CD4-positive, alpha-beta memory T cell (primary cell): ENCODE measurements at regions of chr4 and their contacts with region 1.

Region 1: DNA sequence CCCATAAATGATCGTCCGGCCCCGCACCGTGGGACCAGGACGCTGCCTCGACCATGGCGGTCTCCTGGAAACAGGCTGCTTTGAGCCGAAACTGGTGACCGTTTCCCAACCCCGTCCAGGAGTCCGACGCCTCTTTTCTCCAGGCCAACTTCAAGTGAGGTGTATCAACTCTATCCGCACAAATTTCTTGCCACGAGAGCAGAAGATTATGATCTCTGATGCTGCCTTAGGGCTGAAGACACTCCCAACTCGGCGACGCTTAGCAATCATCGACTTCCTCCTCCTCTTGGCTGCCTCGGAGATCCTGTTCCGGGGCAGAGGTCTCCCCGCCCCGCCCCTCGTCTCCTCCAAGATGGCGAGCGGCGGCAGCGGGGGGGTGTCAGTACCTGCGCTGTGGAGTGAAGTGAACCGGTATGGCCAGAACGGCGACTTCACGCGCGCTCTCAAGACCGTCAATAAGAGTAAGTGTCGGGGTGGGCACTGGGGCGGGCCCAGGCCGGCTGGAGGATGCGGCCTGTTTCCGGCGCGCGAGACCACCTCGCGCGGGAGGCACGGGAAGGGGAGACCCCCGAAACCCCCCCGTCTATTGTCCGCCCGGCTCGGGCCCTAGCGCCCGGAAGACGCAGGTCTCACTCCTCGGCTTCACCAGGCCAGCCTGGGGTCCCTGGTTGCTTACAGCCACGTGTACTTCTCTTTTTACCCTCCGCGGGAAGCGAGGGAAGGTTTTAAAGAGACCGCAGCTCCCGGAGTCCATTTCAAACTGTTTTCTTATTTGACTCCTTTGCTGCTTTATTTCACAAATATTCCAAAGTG is at the start of gene SRP72:
- DNase-seq: peak; percentile 88 to 97 (median 89)
- H3K4me3 ChIP-seq: peak within 1 kb of the TSS; percentile 93 to 98
- H3K4me3 Mint-ChIP-seq: peak within 1 kb of the TSS; percentile 94 to 100 (median 98)
- H3K27ac ChIP-seq: peak within 1 kb of the TSS; percentile 90
- H3K27ac Mint-ChIP-seq: peak within 1 kb of the TSS; percentile 93 to 100 (median 98)
- H3K4me1 ChIP-seq: peaks cover 50% of the 10 kb centered on the region
- H3K4me1 Mint-ChIP-seq: peaks cover 39 to 64% (median 51%) of the 10 kb centered on the region in 4 donors
- H3K27me3 ChIP-seq: no peaks in the 10 kb centered on the region
- H3K27me3 Mint-ChIP-seq: no peaks in the 10 kb centered on the region
- total RNA-seq, gene SRP72: 104 to 107 TPM

Region 2: GRCh38 chr4:55650483-55650882 is 817.0 kb before region 1 on chr4:
- CTCF ChIA-PET with region 1: no interaction called
- POLR2A ChIA-PET with region 1: no interaction called
- intact Hi-C with region 1: no loop called
- DNase-seq: no peak
- H3K4me3 ChIP-seq: no peak overlapping the region
- H3K4me3 Mint-ChIP-seq: no peak overlapping the region
- H3K27ac ChIP-seq: no peak overlapping the region
- H3K27ac Mint-ChIP-seq: no peak overlapping the region
- H3K4me1 ChIP-seq: no peaks in the 10 kb centered on the region
- H3K4me1 Mint-ChIP-seq: no peaks in the 10 kb centered on the region
- H3K27me3 ChIP-seq: no peaks in the 10 kb centered on the region
- H3K27me3 Mint-ChIP-seq: peaks cover 11 to 14% of the 10 kb centered on the region in 2 donors

Region 3: GRCh38 chr4:56387023-56388001 is 80.2 kb before region 1 on chr4 and contains the start of gene AASDH:
- CTCF ChIA-PET with region 1: no interaction called
- POLR2A ChIA-PET with region 1: interaction called, 15 read pairs
- intact Hi-C with region 1: loop called (anchors 1 kb)
- DNase-seq: peak; percentile 94 to 96 (median 95)
- H3K4me3 ChIP-seq: peak within 1 kb of the TSS; percentile 63 to 94
- H3K4me3 Mint-ChIP-seq: peak within 1 kb of the TSS; percentile 91 to 100 (median 96)
- H3K27ac ChIP-seq: peak within 1 kb of the TSS; percentile 81
- H3K27ac Mint-ChIP-seq: peak within 1 kb of the TSS; percentile 98 to 100 (median 99)
- H3K4me1 ChIP-seq: peaks cover 20% of the 10 kb centered on the region
- H3K4me1 Mint-ChIP-seq: peaks cover 21 to 48% (median 37%) of the 10 kb centered on the region in 4 donors
- H3K27me3 ChIP-seq: no peaks in the 10 kb centered on the region
- H3K27me3 Mint-ChIP-seq: no peaks in the 10 kb centered on the region
- total RNA-seq, gene AASDH: 19.2 to 23.7 TPM

Region 4: DNA sequence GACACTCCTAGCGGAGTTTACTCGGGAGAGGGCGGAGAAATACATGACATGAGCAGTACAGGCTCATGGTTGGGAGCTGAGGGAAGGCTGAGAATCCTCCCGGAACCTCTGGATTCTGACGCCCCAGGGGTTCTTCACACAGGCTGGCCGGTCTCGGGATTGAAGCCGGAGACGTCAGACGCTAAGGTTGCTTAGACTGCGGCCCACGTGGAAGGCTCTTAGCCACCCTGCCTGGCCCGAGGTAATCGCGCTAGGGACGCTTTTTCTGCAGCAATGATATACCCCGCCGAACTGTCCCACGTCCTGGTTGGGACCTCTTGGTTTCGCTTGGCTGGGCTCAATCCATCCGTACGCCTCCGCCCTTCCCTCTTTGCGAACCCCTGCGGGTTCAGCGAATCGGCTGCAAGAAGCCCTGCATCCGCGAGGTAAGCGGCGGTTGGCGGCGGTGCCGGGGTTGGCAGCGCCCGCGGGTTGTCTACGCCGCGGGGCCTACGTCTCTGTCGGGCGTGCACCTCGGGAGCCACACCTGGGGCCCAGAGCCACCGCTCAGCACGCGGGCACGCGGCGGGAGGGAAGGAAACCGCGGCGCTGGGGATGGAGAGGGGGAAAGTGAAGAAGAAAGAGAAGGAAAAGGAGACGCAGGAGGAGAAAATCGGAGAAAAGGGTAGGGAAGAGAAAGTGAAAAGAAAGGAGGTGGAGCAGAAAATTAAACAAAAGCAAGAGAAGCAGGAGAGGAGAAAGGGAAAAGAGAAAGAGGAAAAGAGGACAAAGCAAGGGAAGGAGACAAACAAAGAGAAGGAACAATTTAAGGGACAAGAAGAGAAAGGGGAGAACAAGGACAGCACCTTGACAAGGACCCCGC is 38.0 kb after region 1 on chr4 and contains the start of gene ARL9:
- CTCF ChIA-PET with region 1: no interaction called
- POLR2A ChIA-PET with region 1: no interaction called
- intact Hi-C with region 1: loop called (anchors 5 kb)
- DNase-seq: peak; percentile 56 to 74 (median 68)
- H3K4me3 ChIP-seq: peak within 1 kb of the TSS; percentile 28 to 42
- H3K4me3 Mint-ChIP-seq: peak within 1 kb of the TSS; percentile 77 to 91 (median 84)
- H3K27ac ChIP-seq: peak within 1 kb of the TSS; percentile 29
- H3K27ac Mint-ChIP-seq: peak within 1 kb of the TSS; percentile 2 to 94 (median 86)
- H3K4me1 ChIP-seq: peaks cover 10% of the 10 kb centered on the region
- H3K4me1 Mint-ChIP-seq: peaks cover 8 to 21% (median 11%) of the 10 kb centered on the region in 4 donors
- H3K27me3 ChIP-seq: no peaks in the 10 kb centered on the region
- H3K27me3 Mint-ChIP-seq: no peaks in the 10 kb centered on the region
- total RNA-seq, gene ARL9: 0.35 TPM in 1 of 2 experiments, not detected in the other

Region 5: GRCh38 chr4:56530269-56531148 is 63.0 kb after region 1 on chr4:
- CTCF ChIA-PET with region 1: no interaction called
- POLR2A ChIA-PET with region 1: no interaction called
- intact Hi-C with region 1: loop called (anchors 1 kb)
- DNase-seq: peak; percentile 60 to 80 (median 63)
- H3K4me3 ChIP-seq: peak overlapping the region; percentile 48 to 57
- H3K4me3 Mint-ChIP-seq: no peak overlapping the region
- H3K27ac ChIP-seq: no peak overlapping the region
- H3K27ac Mint-ChIP-seq: peak overlapping the region in 6 of 7 donors; percentile 14 to 69 (median 40)
- H3K4me1 ChIP-seq: peaks cover 11% of the 10 kb centered on the region
- H3K4me1 Mint-ChIP-seq: no peaks in the 10 kb centered on the region
- H3K27me3 ChIP-seq: no peaks in the 10 kb centered on the region
- H3K27me3 Mint-ChIP-seq: peaks cover 7 to 9% of the 10 kb centered on the region in 2 donors

Region 6: DNA sequence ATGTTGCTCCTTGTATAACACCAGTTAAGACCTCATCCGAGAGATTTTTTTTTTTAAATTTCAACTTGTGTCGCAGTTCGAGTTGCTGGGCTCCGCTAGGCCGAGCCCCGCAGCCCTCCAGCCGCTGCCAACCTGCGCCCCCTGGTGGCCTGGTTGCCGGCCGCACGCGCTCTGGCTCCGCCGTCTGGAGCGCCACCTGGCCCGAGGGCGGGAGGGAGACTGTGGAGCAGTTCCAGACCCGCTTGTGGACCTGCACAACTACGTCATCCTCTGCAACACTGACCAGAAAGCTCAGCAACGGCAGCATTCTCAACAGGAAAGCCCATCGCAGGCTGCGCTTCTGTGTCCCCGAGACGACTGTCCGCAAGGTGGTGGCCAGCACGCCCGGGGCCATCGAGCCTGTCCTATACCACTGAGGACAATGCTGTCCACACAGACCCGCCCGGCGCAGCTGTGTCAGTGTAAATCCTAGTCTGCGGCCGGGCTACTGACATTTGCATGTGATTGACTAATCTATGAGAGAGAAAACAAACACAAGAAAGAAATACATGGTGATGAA is 77.2 kb after region 1 on chr4:
- CTCF ChIA-PET with region 1: interaction called, 5 read pairs
- POLR2A ChIA-PET with region 1: interaction called, 4 read pairs
- intact Hi-C with region 1: loop called (anchors 1 kb)
- DNase-seq: peak; percentile 69 to 83 (median 78)
- H3K4me3 ChIP-seq: peak overlapping the region; percentile 37 to 42
- H3K4me3 Mint-ChIP-seq: peak overlapping the region; percentile 43 to 77 (median 64)
- H3K27ac ChIP-seq: no peak overlapping the region
- H3K27ac Mint-ChIP-seq: peak overlapping the region in 6 of 7 donors; percentile 7 to 79 (median 22)
- H3K4me1 ChIP-seq: peaks cover 13% of the 10 kb centered on the region
- H3K4me1 Mint-ChIP-seq: peaks cover 8 to 19% (median 8%) of the 10 kb centered on the region in 4 donors
- H3K27me3 ChIP-seq: no peaks in the 10 kb centered on the region
- H3K27me3 Mint-ChIP-seq: peaks cover 4% of the 10 kb centered on the region in 2 donors

Region 7: GRCh38 chr4:56626963-56627362 is 159.5 kb after region 1 on chr4:
- CTCF ChIA-PET with region 1: no interaction called
- POLR2A ChIA-PET with region 1: no interaction called
- intact Hi-C with region 1: no loop called
- DNase-seq: peak in 3 of 5 donors; percentile 7 to 17 (median 8)
- H3K4me3 ChIP-seq: no peak overlapping the region
- H3K4me3 Mint-ChIP-seq: no peak overlapping the region
- H3K27ac ChIP-seq: no peak overlapping the region
- H3K27ac Mint-ChIP-seq: no peak overlapping the region
- H3K4me1 ChIP-seq: no peaks in the 10 kb centered on the region
- H3K4me1 Mint-ChIP-seq: peaks cover 0 to 5% (median 2%) of the 10 kb centered on the region in 4 donors
- H3K27me3 ChIP-seq: no peaks in the 10 kb centered on the region
- H3K27me3 Mint-ChIP-seq: peaks cover 0 to 2% of the 10 kb centered on the region in 2 donors

Region 8: DNA sequence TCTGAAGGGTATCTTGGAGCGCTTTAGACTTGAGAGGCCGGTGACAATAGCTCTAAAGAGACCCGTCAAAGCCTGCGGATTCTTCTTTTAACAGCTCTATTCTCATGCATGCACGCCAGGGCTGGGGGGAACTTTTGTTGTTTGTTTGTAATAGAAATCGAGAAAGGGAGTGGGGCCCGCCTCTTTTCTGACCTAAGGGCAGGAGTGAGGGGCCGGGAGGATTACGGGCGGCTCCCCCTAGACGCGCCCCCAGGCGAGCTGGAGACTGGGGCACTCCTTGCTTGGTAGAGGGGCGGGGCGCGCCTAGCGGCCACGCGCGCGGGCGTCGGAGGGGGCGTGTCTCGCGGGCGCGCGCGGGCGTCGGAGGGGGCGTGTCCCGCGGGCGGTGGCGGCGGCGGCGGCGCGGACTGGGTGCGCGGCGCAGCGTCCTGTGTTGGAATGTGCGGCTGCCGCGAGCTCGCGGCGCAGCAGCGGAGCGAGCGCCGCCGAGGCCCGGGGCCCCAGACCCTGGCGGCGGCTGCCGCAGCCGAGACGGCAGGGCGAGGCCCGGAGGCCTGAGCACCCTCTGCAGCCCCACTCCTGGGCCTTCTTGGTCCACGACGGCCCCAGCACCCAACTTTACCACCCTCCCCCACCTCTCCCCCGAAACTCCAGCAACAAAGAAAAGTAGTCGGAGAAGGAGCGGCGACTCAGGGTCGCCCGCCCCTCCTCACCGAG is 440.2 kb after region 1 on chr4 and contains the start of gene REST:
- CTCF ChIA-PET with region 1: no interaction called
- POLR2A ChIA-PET with region 1: interaction called, 4 read pairs
- intact Hi-C with region 1: loop called (anchors 1 kb)
- DNase-seq: peak; percentile 80 to 91 (median 86)
- H3K4me3 ChIP-seq: peak within 1 kb of the TSS; percentile 58 to 79
- H3K4me3 Mint-ChIP-seq: peak within 1 kb of the TSS; percentile 89 to 97 (median 93)
- H3K27ac ChIP-seq: peak within 1 kb of the TSS; percentile 85
- H3K27ac Mint-ChIP-seq: peak within 1 kb of the TSS; percentile 87 to 97 (median 93)
- H3K4me1 ChIP-seq: peaks cover 42% of the 10 kb centered on the region
- H3K4me1 Mint-ChIP-seq: peaks cover 30 to 54% (median 43%) of the 10 kb centered on the region in 4 donors
- H3K27me3 ChIP-seq: no peaks in the 10 kb centered on the region
- H3K27me3 Mint-ChIP-seq: no peaks in the 10 kb centered on the region
- total RNA-seq, gene REST: 77.3 to 79.2 TPM